Mammary epithelial cell (primary cell): ENCODE measurements at regions of chr9 and their contacts with region 1.

Region 1: DNA sequence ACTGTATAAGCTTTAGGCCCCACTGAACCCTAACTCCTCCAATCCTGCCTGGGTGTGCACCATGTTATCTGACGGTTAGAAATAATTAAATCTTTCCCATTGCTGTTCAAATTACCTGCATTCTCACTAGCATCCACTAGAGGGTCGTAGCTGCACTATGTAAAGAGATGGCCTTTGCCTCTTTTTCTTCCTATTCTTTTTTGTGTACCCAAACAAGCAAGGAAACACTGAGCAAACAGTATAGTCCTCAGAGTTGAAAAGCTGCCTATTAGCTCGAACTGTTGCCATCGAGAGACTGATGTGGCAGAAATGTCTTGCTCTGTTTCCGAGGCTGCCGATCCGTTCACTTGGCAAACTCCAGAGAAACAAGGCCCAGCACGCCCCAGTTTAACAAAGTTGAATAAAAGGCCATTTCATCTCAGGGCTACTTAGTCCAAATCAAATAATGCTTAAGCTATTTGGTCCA is 163.8 kb upstream of the TRPM3 start:
- DNase-seq: peak; percentile 46
- H3K4me3 ChIP-seq: no peak overlapping the region
- H3K27ac ChIP-seq: no peak overlapping the region
- H3K4me1 ChIP-seq: no peaks in the 10 kb centered on the region
- H3K27me3 ChIP-seq: no peaks in the 10 kb centered on the region
- CTCF ChIP-seq: peak; percentile 90 to 99

Region 2: GRCh38 chr9:70962664-70963435 is 322.4 kb before region 1 on chr9:
- CTCF ChIA-PET with region 1: no interaction called
- dilution Hi-C with region 1: no loop called
- in situ Hi-C with region 1: no loop called
- intact Hi-C with region 1: no loop called
- DNase-seq: peak; percentile 10
- H3K4me3 ChIP-seq: no peak overlapping the region
- H3K27ac ChIP-seq: no peak overlapping the region
- H3K4me1 ChIP-seq: no peaks in the 10 kb centered on the region
- H3K27me3 ChIP-seq: no peaks in the 10 kb centered on the region
- CTCF ChIP-seq: no peak

Region 3: DNA sequence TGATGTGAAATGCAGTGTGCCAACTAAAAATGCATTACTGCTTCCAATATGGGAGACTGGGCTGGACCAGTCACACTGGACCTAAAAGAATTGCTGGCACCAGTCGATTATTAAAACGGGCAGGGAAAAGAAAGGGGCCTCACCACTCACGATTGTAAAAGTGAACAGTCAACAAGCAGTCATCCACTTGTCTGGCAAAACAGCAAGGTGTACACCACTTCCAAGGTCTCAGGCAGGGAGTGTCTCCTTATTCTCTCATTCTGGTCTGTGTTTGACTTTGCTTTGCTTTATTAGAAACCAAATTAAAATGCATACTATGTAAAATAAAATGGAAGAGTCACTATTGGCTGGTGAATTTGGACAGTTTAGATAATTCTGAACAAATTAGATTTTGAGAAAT is 106.0 kb before region 1 on chr9:
- CTCF ChIA-PET with region 1: no interaction called
- dilution Hi-C with region 1: no loop called
- in situ Hi-C with region 1: no loop called
- intact Hi-C with region 1: no loop called
- DNase-seq: no peak
- H3K4me3 ChIP-seq: no peak overlapping the region
- H3K27ac ChIP-seq: no peak overlapping the region
- H3K4me1 ChIP-seq: no peaks in the 10 kb centered on the region
- H3K27me3 ChIP-seq: no peaks in the 10 kb centered on the region
- CTCF ChIP-seq: no peak

Region 4: DNA sequence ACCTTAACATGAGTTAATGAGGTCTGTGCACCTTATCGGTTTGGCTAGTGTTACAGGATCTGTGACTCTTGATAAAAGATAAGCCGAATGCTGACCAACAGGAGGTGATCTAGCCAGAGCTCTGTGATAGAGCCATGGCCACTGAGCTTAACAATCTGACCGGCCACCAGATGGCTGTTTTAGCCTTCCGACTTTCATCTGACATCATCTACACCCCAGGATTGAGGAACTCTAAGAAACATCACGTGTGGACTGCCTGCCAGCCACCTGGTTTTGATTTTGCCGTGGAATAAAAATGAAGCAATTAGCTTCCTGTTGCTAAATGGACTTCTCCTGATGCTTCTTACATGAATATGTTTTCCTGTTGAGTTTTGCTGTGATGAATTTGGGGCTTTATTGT is 201.8 kb after region 1 on chr9:
- CTCF ChIA-PET with region 1: no interaction called
- dilution Hi-C with region 1: no loop called
- in situ Hi-C with region 1: no loop called
- intact Hi-C with region 1: loop called (anchors 5 kb)
- DNase-seq: no peak
- H3K4me3 ChIP-seq: no peak overlapping the region
- H3K27ac ChIP-seq: no peak overlapping the region
- H3K4me1 ChIP-seq: no peaks in the 10 kb centered on the region
- H3K27me3 ChIP-seq: no peaks in the 10 kb centered on the region
- CTCF ChIP-seq: no peak

Region 5: DNA sequence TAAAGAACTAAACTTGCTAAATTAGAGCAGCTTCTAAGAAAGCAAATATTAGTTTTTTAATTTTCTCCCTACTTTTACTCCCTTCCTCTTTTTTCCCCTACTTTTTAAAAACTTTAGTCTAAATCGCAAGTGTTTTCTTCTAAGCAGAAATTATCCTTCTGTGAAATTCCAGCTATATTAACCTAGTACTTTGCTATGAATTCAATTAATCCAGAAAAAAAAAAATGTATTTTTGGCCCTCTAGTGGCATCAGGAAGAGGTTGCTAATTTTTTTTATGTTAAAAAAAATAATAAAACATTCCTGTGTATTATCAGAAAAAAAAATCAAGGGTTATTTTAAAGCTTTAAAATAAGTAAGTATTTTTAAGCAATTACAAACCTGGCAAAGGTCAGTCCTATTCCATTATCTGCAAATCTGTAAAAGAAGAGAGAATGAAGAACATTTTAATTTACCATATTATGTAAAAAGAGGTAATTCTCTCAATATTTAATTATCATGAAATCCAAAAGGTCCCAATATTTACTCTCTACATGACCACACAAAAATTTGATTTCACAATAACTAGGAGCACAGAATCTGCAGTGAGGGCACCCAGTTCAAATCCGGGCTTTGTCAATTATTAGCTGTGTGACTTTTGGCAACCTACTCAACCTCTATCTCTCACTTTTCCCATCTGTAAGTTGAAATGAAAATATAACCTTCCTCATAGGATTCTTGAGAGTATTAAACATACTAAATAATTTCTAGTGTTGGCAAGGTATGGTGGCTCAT is 431.1 kb after region 1 on chr9:
- CTCF ChIA-PET with region 1: no interaction called
- dilution Hi-C with region 1: no loop called
- in situ Hi-C with region 1: loop called in 1 of 2 experiments (anchors 25 kb)
- intact Hi-C with region 1: no loop called
- DNase-seq: no peak
- H3K4me3 ChIP-seq: no peak overlapping the region
- H3K27ac ChIP-seq: no peak overlapping the region
- H3K4me1 ChIP-seq: peaks cover 19% of the 10 kb centered on the region
- H3K27me3 ChIP-seq: no peaks in the 10 kb centered on the region
- CTCF ChIP-seq: peak; percentile 39 to 40

Region 6: GRCh38 chr9:71806901-71807307 is 521.7 kb after region 1 on chr9:
- CTCF ChIA-PET with region 1: no interaction called
- dilution Hi-C with region 1: no loop called
- in situ Hi-C with region 1: loop called in 1 of 2 experiments (anchors 25 kb)
- intact Hi-C with region 1: no loop called
- DNase-seq: peak; percentile 64
- H3K4me3 ChIP-seq: no peak overlapping the region
- H3K27ac ChIP-seq: no peak overlapping the region
- H3K4me1 ChIP-seq: no peaks in the 10 kb centered on the region
- H3K27me3 ChIP-seq: no peaks in the 10 kb centered on the region
- CTCF ChIP-seq: peak; percentile 97 to 99

Region 7: GRCh38 chr9:71975833-71976232 is 690.6 kb after region 1 on chr9:
- CTCF ChIA-PET with region 1: no interaction called
- dilution Hi-C with region 1: no loop called
- in situ Hi-C with region 1: loop called in 1 of 2 experiments (anchors 25 kb)
- intact Hi-C with region 1: loop called (anchors 2 kb)
- DNase-seq: no peak
- H3K4me3 ChIP-seq: no peak overlapping the region
- H3K27ac ChIP-seq: no peak overlapping the region
- H3K4me1 ChIP-seq: no peaks in the 10 kb centered on the region
- H3K27me3 ChIP-seq: no peaks in the 10 kb centered on the region
- CTCF ChIP-seq: peak; percentile 22 to 55